Heart right ventricle (tissue), 16 donors: ENCODE measurements at regions of chr10 and their contacts with region 1.

Region 1: GRCh38 chr10:29646238-29646902 is 11.6 kb upstream of the SVIL start:
- DNase-seq: no peak
- ATAC-seq: peak in 4 of 8 donors; percentile 8 to 41 (median 18)
- H3K4me3 ChIP-seq: peak overlapping the region in 1 of 10 donors; percentile 18
- H3K27ac ChIP-seq: peak overlapping the region in 9 of 10 donors; percentile 16 to 72 (median 44)
- H3K4me1 ChIP-seq: peaks cover 6 to 67% (median 53%) of the 10 kb centered on the region in 9 donors
- H3K27me3 ChIP-seq: no peaks in the 10 kb centered on the region
- CTCF ChIP-seq: no peak

Region 2: GRCh38 chr10:29430101-29430500 is 216.3 kb before region 1 on chr10:
- intact Hi-C with region 1: no loop called
- DNase-seq: no peak
- ATAC-seq: no peak
- H3K4me3 ChIP-seq: no peak overlapping the region
- H3K27ac ChIP-seq: no peak overlapping the region
- H3K4me1 ChIP-seq: peaks cover 0 to 21% (median 0%) of the 10 kb centered on the region in 9 donors
- H3K27me3 ChIP-seq: no peaks in the 10 kb centered on the region
- CTCF ChIP-seq: no peak

Region 3: DNA sequence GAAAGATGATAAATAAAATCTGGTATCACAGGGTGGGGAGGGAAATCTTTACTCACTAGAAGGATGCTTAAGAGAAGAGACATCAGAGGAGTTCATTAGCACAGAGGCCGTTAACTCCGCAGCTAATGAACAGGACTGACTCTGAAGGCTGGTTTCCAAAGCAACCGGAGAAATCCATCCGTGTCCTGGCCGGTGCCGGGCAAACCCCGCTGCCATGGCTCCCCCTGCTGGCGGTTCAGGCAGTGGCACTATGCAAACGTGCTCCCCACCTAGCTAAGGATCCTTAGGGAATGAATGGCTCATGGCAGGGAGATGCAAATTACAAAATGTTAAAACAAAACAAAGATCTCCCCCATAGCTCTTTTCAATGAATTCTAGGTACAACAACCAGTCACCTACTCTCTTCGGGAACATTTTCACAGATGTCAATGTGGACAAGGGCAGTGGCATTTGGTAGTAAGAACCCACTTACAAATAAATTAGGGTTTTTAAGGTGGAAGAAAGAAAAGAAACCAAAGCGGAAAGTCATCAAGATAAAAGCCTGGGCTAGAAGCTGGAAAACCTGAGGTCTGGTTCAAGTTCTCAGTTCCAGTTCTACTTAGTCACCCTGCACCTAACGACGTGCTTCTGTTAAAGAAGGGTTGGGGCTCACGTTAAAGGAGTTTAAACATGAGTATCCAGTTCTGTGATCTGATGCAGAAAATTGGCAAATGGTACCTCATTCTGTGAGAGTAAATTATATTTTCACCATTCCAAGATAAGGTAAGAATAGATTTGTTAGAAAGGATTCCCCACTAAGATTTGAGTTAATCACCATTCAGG is 149.8 kb before region 1 on chr10:
- intact Hi-C with region 1: no loop called
- DNase-seq: peak; percentile 66 to 82
- ATAC-seq: peak; percentile 55 to 80 (median 74)
- H3K4me3 ChIP-seq: no peak overlapping the region
- H3K27ac ChIP-seq: no peak overlapping the region
- H3K4me1 ChIP-seq: peaks cover 0 to 5% (median 0%) of the 10 kb centered on the region in 9 donors
- H3K27me3 ChIP-seq: no peaks in the 10 kb centered on the region
- CTCF ChIP-seq: peak; percentile 86 to 97 (median 92)

Region 4: GRCh38 chr10:29569795-29570194 is 76.6 kb before region 1 on chr10:
- intact Hi-C with region 1: no loop called
- DNase-seq: no peak
- ATAC-seq: no peak
- H3K4me3 ChIP-seq: no peak overlapping the region
- H3K27ac ChIP-seq: peak overlapping the region in 1 of 10 donors; percentile 45
- H3K4me1 ChIP-seq: peaks cover 0 to 50% (median 23%) of the 10 kb centered on the region in 9 donors
- H3K27me3 ChIP-seq: no peaks in the 10 kb centered on the region
- CTCF ChIP-seq: no peak

Region 5: DNA sequence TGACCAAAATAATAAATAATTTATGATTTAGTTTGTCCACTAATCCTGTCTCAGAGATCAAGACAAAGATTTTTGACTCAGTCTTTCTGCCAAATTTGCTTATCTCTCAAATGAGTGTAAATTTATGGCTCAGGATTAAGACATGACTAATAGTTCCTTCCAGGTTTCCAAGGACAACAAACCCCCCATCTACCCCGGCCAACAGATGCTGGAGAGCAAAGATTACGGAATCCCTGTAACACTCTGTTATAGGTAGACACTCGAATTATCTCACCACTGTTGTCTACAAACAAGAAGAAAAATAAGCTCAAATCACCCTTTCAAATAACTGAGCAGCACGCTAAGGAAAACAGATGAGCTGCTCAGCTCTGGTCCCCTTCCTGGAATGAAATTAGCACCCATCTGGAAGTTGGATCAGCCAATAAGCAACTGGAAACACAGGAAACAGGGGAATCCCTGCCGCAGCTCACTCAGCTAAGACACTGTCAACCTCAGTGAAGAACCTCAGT is 45.2 kb after region 1 on chr10:
- intact Hi-C with region 1: loop called in 1 of 10 experiments (anchors 5 kb)
- DNase-seq: peak in 1 of 2 donors; percentile 53
- ATAC-seq: peak; percentile 69 to 90 (median 86)
- H3K4me3 ChIP-seq: peak overlapping the region in 4 of 10 donors; percentile 9 to 26 (median 20)
- H3K27ac ChIP-seq: peak overlapping the region; percentile 2 to 77 (median 64)
- H3K4me1 ChIP-seq: peaks cover 5 to 39% (median 26%) of the 10 kb centered on the region in 9 donors
- H3K27me3 ChIP-seq: no peaks in the 10 kb centered on the region
- CTCF ChIP-seq: no peak

Region 6: DNA sequence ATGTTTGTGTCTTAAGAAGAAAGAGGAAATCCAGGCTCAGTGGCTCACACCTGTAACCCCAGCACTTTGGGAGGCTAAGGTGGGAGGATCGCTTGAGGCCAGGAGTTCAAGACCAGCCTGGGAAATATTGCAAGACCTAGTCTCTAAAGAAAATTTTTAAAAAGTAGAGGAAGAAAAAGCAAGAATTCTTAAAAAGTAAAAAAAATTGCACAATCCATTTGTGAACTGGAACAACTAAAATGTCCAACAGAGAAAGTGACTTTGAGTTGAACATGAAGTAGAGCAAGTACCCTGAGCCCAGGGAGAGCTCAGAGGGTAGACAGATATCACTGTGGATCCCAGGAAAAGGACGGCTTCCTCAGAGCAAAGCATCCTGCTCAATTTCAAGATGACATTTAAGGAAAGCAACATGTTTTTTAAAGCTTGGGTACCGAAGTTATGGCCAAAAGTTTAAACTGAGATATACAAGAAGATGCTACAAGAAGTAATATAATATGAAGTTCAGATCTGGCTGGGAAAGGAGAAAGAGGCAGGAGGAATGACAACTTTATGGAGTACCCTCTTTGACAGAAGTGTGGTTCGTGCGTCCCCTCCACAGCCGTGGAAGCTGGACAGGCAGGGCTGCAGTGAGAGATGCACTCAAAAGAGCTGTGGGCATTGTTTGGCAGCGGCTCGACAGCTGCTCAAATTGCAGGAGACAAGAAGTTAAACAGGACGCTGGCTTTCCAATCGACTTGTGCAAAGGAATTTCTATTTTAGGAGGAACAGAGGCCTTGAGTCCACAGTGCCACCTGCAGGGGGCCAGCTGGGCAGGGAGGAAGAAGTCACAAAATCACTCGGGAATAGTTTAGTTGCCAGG is 211.7 kb after region 1 on chr10:
- intact Hi-C with region 1: loop called in 1 of 10 experiments (anchors 10 kb)
- DNase-seq: peak; percentile 65 to 67
- ATAC-seq: peak; percentile 67 to 94 (median 87)
- H3K4me3 ChIP-seq: peak overlapping the region in 1 of 10 donors; percentile 12
- H3K27ac ChIP-seq: peak overlapping the region in 6 of 10 donors; percentile 5 to 59 (median 40)
- H3K4me1 ChIP-seq: peaks cover 0 to 13% (median 10%) of the 10 kb centered on the region in 9 donors
- H3K27me3 ChIP-seq: no peaks in the 10 kb centered on the region
- CTCF ChIP-seq: peak; percentile 45 to 81 (median 68)